Posterior vena cava (tissue), 2 donors: ENCODE measurements at regions of chr9 and their contacts with region 1.

Region 1: GRCh38 chr9:2620919-2621679 is 488 bp upstream of the VLDLR start:
- DNase-seq: peak; percentile 90

Region 2: GRCh38 chr9:2014696-2015580 is 606.2 kb before region 1 on chr9 and contains the start of gene SMARCA2:
- intact Hi-C with region 1: loop called in 1 of 2 experiments (anchors 10 kb)
- DNase-seq: peak; percentile 99
- total RNA-seq, gene SMARCA2: 152 to 174 TPM

Region 3: GRCh38 chr9:2125906-2126305 is 495.2 kb before region 1 on chr9:
- intact Hi-C with region 1: loop called in 1 of 2 experiments (anchors 10 kb)
- DNase-seq: no peak

Region 4: GRCh38 chr9:2727966-2728613 is 107.0 kb after region 1 on chr9:
- intact Hi-C with region 1: loop called in 1 of 2 experiments (anchors 10 kb)
- DNase-seq: no peak

Region 5: GRCh38 chr9:2809691-2810433 is 188.8 kb after region 1 on chr9:
- intact Hi-C with region 1: loop called in 1 of 2 experiments (anchors 10 kb)
- DNase-seq: no peak